ENCODE measurements at regions of chr2 and their contacts with region 1.

Region 1: GRCh38 chr2:151946899-151947822 is 118.9 kb upstream of the ARL5A start:
- DNase-seq: peak in 1 of 2 donors; percentile 53
- ATAC-seq: peak; percentile 85
- H3K4me3 ChIP-seq: peak overlapping the region; percentile 3 to 69
- H3K27ac ChIP-seq: peak overlapping the region; percentile 84 to 94
- H3K4me1 ChIP-seq: peaks cover 0 to 12% of the 10 kb centered on the region in 2 donors
- H3K27me3 ChIP-seq: no peaks in the 10 kb centered on the region

Region 2: GRCh38 chr2:151828143-151828889 is 118.8 kb before region 1 on chr2 and contains the start of gene ARL5A:
- intact Hi-C with region 1: loop called (anchors 5 to 10 kb)
- DNase-seq: peak; percentile 97 to 99
- ATAC-seq: peak; percentile 98
- H3K4me3 ChIP-seq: peak within 1 kb of the TSS; percentile 85 to 87
- H3K27ac ChIP-seq: peak within 1 kb of the TSS; percentile 72 to 79
- H3K4me1 ChIP-seq: peaks cover 0 to 5% of the 10 kb centered on the region in 2 donors
- H3K27me3 ChIP-seq: no peaks in the 10 kb centered on the region
- total RNA-seq, gene ARL5A: 78.9 to 95.9 TPM

Region 3: GRCh38 chr2:151886241-151886640 is 60.9 kb before region 1 on chr2:
- intact Hi-C with region 1: loop called in 1 of 2 experiments (anchors 10 kb)
- DNase-seq: no peak
- ATAC-seq: no peak
- H3K4me3 ChIP-seq: no peak overlapping the region
- H3K27ac ChIP-seq: no peak overlapping the region
- H3K4me1 ChIP-seq: peaks cover 0 to 3% of the 10 kb centered on the region in 2 donors
- H3K27me3 ChIP-seq: no peaks in the 10 kb centered on the region

Measured in aorta (tissue), 5 donors.